Ascending aorta (tissue), 2 donors: ENCODE measurements at regions of chr15 and their contacts with region 1.

Region 1: GRCh38 chr15:35843498-35843897 is 297.5 kb upstream of the DPH6 start:
- DNase-seq: no peak
- H3K4me3 ChIP-seq: no peak overlapping the region
- H3K27ac ChIP-seq: no peak overlapping the region
- H3K4me1 ChIP-seq: no peaks in the 10 kb centered on the region
- H3K27me3 ChIP-seq: no peaks in the 10 kb centered on the region
- CTCF ChIP-seq: no peak

Region 2: DNA sequence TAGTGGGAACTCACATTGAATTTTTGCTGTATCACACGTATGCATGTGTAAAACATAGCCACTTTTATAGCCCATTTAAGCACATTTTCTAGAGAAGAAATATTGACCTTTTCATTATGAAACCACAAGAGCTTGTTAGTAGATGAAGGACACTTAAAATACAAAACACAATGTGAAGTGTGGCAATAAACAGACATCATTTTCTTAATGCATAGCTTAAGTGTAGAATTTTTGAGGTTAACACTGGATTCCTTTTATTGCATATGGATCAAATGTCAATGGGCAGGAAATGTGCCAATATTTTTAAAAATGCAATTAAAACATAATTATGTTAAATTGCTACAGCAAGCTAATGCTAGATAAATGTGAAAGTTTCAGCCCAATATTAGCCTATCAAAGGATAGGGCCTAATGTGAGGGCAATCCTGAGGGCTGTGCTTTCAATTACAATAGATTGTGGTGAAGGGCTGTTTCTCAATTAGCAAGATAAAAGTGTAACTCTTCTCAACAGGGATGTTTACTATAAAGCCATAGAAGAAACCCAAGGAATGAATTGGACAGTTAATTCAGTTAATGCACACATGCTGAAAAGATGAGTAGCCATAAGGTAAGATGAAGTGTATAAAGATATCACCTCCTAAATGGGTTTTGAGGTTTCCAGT is 246.9 kb after region 1 on chr15:
- intact Hi-C with region 1: loop called (anchors 10 kb)
- DNase-seq: no peak
- H3K4me3 ChIP-seq: no peak overlapping the region
- H3K27ac ChIP-seq: no peak overlapping the region
- H3K4me1 ChIP-seq: no peaks in the 10 kb centered on the region
- H3K27me3 ChIP-seq: no peaks in the 10 kb centered on the region
- CTCF ChIP-seq: no peak

Region 3: GRCh38 chr15:36896949-36897348 is 1053.5 kb after region 1 on chr15:
- intact Hi-C with region 1: no loop called
- DNase-seq: no peak
- H3K4me3 ChIP-seq: no peak overlapping the region
- H3K27ac ChIP-seq: no peak overlapping the region
- H3K4me1 ChIP-seq: no peaks in the 10 kb centered on the region
- H3K27me3 ChIP-seq: no peaks in the 10 kb centered on the region
- CTCF ChIP-seq: no peak